Activated CD4-positive, alpha-beta T cell treated with anti-CD3 and anti-CD28 coated beads for 36 hours (primary cell): ENCODE measurements at regions of chr19 and their contacts with region 1.

Region 1: DNA sequence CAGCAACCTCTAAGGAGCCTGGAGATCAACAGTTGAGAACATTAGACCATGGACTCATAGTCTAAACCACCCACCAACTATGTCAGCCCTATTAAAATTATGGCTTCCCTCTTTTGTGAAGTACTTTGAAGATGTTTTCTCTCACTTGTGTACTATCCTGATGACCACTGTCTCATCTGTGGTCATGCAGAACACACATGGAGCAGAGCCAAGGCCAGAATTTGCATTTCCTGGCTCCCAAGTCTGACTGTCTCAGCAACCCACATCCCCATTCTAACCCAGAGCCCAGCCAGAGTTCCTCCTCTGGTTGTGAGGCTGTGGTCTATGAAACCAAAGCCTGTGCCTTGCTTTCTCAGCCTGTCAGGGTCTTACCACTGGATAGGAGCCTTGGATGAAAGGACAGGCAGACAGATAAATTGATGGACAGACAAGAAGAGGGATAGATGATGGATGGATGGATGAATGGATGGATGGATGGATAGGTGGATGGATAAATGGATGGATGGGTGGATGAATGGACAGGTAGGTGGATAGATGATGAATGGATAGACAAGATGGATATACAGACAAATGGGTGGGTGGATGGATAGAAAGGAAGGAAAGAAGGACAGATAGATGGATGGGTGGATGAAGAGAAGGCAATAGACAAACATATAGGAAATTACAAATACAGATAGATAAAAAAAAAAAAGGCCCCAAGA is 35.4 kb downstream of the ZNF557 start:
- DNase-seq: no peak
- ATAC-seq: no peak
- H3K4me3 Mint-ChIP-seq: no peak overlapping the region
- H3K27ac Mint-ChIP-seq: no peak overlapping the region
- H3K4me1 Mint-ChIP-seq: peaks cover 14% of the 10 kb centered on the region
- H3K27me3 Mint-ChIP-seq: no peaks in the 10 kb centered on the region

Region 2: DNA sequence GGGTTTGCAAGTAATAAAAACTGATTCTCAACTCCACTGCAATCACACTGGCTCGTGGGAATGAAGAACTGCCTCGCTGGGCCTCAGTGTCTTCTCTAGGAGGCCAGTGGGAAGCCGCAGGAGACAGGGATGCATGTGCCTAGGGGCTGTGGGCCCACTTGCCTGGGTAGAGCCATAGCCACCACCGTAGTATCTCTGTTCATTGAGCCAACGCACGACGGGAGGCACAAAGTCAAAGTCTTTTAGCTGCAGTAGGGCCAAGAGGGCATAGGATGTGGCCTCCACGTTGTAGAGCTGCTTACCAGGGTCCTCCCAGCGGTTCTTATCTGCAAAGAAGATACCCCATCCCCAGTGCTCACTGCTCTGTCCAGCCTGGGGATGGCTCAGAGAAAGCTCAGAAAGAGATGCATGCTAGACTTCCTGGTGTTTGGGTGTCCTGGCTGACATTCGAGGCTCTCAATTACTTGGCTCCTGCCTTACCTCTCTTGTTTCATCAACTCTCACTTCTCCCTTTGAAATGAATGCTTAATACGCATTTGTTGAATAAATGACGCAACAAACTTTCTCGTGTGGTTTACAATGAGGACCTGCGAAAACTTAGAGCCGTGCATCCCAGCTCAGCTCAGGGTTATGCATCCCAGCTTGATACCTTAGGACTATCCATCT is 418.8 kb before region 1 on chr19:
- CTCF ChIA-PET with region 1: no interaction called
- POLR2A ChIA-PET with region 1: interaction called, 10 read pairs
- intact Hi-C with region 1: no loop called
- DNase-seq: no peak
- ATAC-seq: no peak
- H3K4me3 Mint-ChIP-seq: no peak overlapping the region
- H3K27ac Mint-ChIP-seq: no peak overlapping the region
- H3K4me1 Mint-ChIP-seq: peaks cover 18% of the 10 kb centered on the region
- H3K27me3 Mint-ChIP-seq: peaks cover 3% of the 10 kb centered on the region

Region 3: GRCh38 chr19:7145494-7146485 is 40.9 kb after region 1 on chr19:
- CTCF ChIA-PET with region 1: interaction called, 3 read pairs
- POLR2A ChIA-PET with region 1: no interaction called
- intact Hi-C with region 1: loop called in 1 of 2 experiments (anchors 5 kb)
- DNase-seq: no peak
- ATAC-seq: no peak
- H3K4me3 Mint-ChIP-seq: no peak overlapping the region
- H3K27ac Mint-ChIP-seq: no peak overlapping the region
- H3K4me1 Mint-ChIP-seq: no peaks in the 10 kb centered on the region
- H3K27me3 Mint-ChIP-seq: no peaks in the 10 kb centered on the region